ENCODE measurements at regions of chr16 and their contacts with region 1.

Region 1: GRCh38 chr16:68851601-68852000 is 8.3 kb downstream of the TANGO6 start:
- DNase-seq: no peak
- H3K4me3 ChIP-seq: no peak overlapping the region
- H3K27ac ChIP-seq: no peak overlapping the region
- H3K4me1 ChIP-seq: no peaks in the 10 kb centered on the region
- H3K27me3 ChIP-seq: no peaks in the 10 kb centered on the region
- CTCF ChIP-seq: no peak
- POLR2A ChIP-seq: no peak

Region 2: GRCh38 chr16:68719993-68720489 is 131.6 kb before region 1 on chr16:
- intact Hi-C with region 1: no loop called
- DNase-seq: no peak
- H3K4me3 ChIP-seq: no peak overlapping the region
- H3K27ac ChIP-seq: no peak overlapping the region
- H3K4me1 ChIP-seq: no peaks in the 10 kb centered on the region
- H3K27me3 ChIP-seq: no peaks in the 10 kb centered on the region
- CTCF ChIP-seq: no peak
- POLR2A ChIP-seq: no peak

Region 3: GRCh38 chr16:69112285-69113129 is 260.9 kb after region 1 on chr16:
- intact Hi-C with region 1: loop called (anchors 10 kb)
- DNase-seq: peak; percentile 77
- H3K4me3 ChIP-seq: no peak overlapping the region
- H3K27ac ChIP-seq: no peak overlapping the region
- H3K4me1 ChIP-seq: peaks cover 6% of the 10 kb centered on the region
- H3K27me3 ChIP-seq: no peaks in the 10 kb centered on the region
- CTCF ChIP-seq: peak in 2 of 3 experiments; percentile 51 to 66
- POLR2A ChIP-seq: no peak

Measured in testis (tissue), 5 donors.